PC-9 (cell line): ENCODE measurements at regions of chr12 and their contacts with region 1.

Region 1: GRCh38 chr12:118302066-118302465 is 70.6 kb downstream of the TAOK3 start:
- DNase-seq: peak; percentile 75 to 97
- H3K4me3 ChIP-seq: no peak overlapping the region
- H3K27ac ChIP-seq: peak overlapping the region; percentile 66
- H3K4me1 ChIP-seq: peaks cover 55% of the 10 kb centered on the region
- H3K27me3 ChIP-seq: no peaks in the 10 kb centered on the region
- CTCF ChIP-seq: no peak

Region 2: DNA sequence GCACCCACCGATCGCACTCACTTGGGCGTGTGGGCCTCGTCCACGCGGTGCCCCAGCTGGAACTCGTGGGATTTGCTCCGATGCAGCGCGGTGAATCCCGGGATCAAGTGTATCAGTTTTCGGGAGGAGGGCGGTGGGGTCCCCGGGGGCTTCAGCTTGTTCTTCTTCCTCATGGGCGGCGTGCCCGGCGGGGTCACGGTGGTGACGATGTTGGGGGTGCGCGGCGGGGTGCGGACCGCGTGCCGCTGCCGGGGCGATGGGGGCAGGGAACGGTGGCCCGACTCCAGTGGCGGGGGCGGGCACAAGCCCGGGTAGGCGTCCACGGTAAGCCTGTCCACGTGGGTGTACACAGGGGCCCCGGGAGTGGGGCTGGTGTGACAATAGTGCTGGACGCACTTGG is 541.1 kb before region 1 on chr12:
- CTCF ChIA-PET with region 1: no interaction called
- POLR2A ChIA-PET with region 1: no interaction called
- intact Hi-C with region 1: no loop called
- DNase-seq: no peak
- H3K4me3 ChIP-seq: no peak overlapping the region
- H3K27ac ChIP-seq: no peak overlapping the region
- H3K4me1 ChIP-seq: no peaks in the 10 kb centered on the region
- H3K27me3 ChIP-seq: 0 out of 2 replicates have a peak, but pooled peaks cover 4% of the 10 kb centered on the region
- CTCF ChIP-seq: no peak

Region 3: GRCh38 chr12:118183705-118184104 is 118.4 kb before region 1 on chr12:
- CTCF ChIA-PET with region 1: no interaction called
- POLR2A ChIA-PET with region 1: no interaction called
- intact Hi-C with region 1: loop called (anchors 5 kb)
- DNase-seq: no peak
- H3K4me3 ChIP-seq: no peak overlapping the region
- H3K27ac ChIP-seq: peak overlapping the region; percentile 55; the same call in 1 of the 2 replicates
- H3K4me1 ChIP-seq: peaks cover 5% of the 10 kb centered on the region; the same call in 1 of the 2 replicates
- H3K27me3 ChIP-seq: no peaks in the 10 kb centered on the region
- CTCF ChIP-seq: no peak

Region 4: GRCh38 chr12:118271790-118272417 is 30.2 kb before region 1 on chr12:
- CTCF ChIA-PET with region 1: interaction called, 4 read pairs
- POLR2A ChIA-PET with region 1: no interaction called
- intact Hi-C with region 1: loop called (anchors 2 kb)
- DNase-seq: peak; percentile 59 to 94
- H3K4me3 ChIP-seq: peak overlapping the region; percentile 49
- H3K27ac ChIP-seq: peak overlapping the region; percentile 96
- H3K4me1 ChIP-seq: peaks cover 61% of the 10 kb centered on the region
- H3K27me3 ChIP-seq: no peaks in the 10 kb centered on the region
- CTCF ChIP-seq: no peak

Region 5: DNA sequence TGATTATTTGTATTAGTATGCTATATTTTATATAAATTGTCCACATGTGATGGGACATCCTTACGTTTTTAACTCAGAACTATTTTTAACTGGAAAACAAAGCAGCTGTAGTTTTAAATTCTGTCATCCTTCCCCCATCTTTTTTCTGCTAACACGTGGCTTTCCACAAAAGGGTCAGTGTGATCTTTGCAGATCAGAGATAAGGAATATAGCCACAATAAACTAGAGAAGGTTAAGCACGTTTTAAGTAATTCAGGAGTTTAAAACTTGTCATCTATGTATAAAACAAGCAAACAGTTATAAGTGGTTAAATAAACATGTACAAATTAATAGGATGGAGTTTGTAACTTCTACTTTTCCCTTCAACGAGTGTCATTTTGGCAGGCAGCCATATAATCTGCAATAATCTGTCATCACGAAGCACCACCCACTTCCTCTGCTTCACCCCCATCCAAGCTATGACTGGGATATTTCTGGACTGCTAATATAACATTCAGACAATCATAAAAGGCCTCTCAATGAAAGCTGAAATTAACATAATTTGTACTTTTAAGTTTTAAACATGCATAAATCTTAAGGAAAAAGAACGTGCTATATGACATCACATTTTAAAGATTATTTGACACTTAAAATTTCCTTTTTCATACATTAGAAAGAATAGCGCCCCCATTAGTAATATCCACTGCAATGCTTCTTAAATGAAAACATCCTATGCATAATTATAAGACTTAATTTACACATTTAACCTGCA is 55.4 kb after region 1 on chr12:
- CTCF ChIA-PET with region 1: no interaction called
- POLR2A ChIA-PET with region 1: interaction called, 5 read pairs
- intact Hi-C with region 1: loop called (anchors 5 kb)
- DNase-seq: no peak
- H3K4me3 ChIP-seq: no peak overlapping the region
- H3K27ac ChIP-seq: peak overlapping the region; percentile 81
- H3K4me1 ChIP-seq: peaks cover 51% of the 10 kb centered on the region
- H3K27me3 ChIP-seq: no peaks in the 10 kb centered on the region
- CTCF ChIP-seq: no peak